ENCODE measurements at regions of chr5 and their contacts with region 1.

Region 1: DNA sequence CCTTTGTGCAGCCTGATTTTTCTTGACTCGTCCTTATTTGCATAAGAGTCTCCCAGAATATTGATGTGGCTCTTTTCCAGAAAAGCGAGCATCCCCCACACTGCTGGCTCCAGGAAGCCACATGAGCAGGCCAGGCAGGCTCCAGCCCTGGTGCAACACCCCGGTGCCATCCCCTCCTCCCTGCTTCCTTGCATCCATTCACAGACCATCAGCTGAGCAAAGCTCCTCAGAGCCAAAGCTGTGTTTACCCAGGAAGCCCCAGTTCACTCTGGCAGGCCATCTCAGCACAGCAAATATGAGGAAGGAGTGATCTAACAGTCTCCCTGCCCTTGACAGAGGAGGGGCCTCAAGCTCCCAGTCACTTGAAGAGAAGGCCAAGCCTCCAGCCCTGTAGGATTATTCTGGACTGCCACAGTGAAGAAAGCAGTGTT is 34.4 kb downstream of the INSYN2B start:
- DNase-seq: peak; percentile 72
- ATAC-seq: peak; percentile 97
- H3K4me3 ChIP-seq: no peak overlapping the region
- H3K27ac ChIP-seq: peak overlapping the region; percentile 61
- H3K4me1 ChIP-seq: peaks cover 20% of the 10 kb centered on the region
- H3K27me3 ChIP-seq: no peaks in the 10 kb centered on the region
- CTCF ChIP-seq: no peak

Region 2: DNA sequence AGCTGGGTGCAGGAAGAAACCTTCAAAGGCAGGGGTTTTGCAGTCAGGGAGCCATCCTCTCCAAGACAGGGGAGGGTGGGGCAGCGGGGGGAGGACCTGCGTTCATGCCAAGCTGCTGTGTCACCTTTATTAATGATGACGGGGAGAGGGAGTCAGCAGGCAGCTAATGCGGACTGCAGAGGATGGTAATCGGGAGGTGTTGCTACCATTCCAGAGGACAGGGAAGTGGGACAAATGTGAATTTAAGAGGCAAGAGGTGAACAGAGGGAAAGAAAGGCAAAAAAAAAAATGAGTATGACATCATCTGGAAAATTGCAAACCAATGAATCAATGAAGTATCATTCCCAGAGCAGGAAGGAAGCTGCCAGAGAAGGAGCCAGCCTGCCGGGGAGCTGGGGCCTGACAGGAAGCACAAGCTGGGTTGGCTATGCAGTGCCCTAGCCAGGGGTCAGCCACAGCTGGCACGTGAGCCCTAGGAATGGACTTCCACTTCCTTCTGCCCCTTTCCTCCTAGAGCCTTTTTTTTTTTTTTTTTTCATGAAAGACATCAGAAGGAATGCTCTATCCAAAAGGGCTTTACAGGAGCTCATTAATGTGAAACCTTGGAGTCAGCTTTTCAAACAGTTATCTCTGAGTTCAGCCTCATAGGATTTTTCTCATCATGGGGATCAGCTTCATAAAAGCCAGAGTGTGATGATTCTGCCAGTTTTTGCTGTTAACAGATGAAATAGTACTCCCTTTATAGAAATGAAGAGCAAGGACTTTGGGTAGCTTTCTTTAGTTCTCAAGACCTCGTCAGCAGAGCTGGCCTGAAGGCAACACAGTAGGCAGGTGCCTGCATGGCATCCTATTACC is 25.3 kb after region 1 on chr5:
- CTCF ChIA-PET with region 1: no interaction called
- POLR2A ChIA-PET with region 1: interaction called, 6 read pairs
- intact Hi-C with region 1: loop called (anchors 2 kb)
- DNase-seq: peak; percentile 91
- ATAC-seq: peak; percentile 91
- H3K4me3 ChIP-seq: no peak overlapping the region
- H3K27ac ChIP-seq: peak overlapping the region; percentile 83
- H3K4me1 ChIP-seq: peaks cover 34% of the 10 kb centered on the region
- H3K27me3 ChIP-seq: no peaks in the 10 kb centered on the region
- CTCF ChIP-seq: no peak

Measured in PC-3 (cell line).